Natural killer cell (primary cell): ENCODE measurements at regions of chr19 and their contacts with region 1.

Region 1: GRCh38 chr19:52189735-52190486 is at the start of gene PPP2R1A:
- DNase-seq: peak; percentile 97 to 100
- ATAC-seq: peak; percentile 84 to 93 (median 85)
- H3K4me3 ChIP-seq: peak within 1 kb of the TSS; percentile 61
- H3K4me3 Mint-ChIP-seq: peak within 1 kb of the TSS; percentile 99
- H3K27ac ChIP-seq: peak within 1 kb of the TSS; percentile 87
- H3K27ac Mint-ChIP-seq: peak within 1 kb of the TSS; percentile 99
- H3K4me1 ChIP-seq: peaks cover 36% of the 10 kb centered on the region
- H3K4me1 Mint-ChIP-seq: peaks cover 51 to 57% of the 10 kb centered on the region in 2 donors
- H3K27me3 ChIP-seq: no peaks in the 10 kb centered on the region
- H3K27me3 Mint-ChIP-seq: no peaks in the 10 kb centered on the region
- CTCF ChIP-seq: no peak
- total RNA-seq, gene PPP2R1A: 221 to 256 (median 232) TPM

Region 2: DNA sequence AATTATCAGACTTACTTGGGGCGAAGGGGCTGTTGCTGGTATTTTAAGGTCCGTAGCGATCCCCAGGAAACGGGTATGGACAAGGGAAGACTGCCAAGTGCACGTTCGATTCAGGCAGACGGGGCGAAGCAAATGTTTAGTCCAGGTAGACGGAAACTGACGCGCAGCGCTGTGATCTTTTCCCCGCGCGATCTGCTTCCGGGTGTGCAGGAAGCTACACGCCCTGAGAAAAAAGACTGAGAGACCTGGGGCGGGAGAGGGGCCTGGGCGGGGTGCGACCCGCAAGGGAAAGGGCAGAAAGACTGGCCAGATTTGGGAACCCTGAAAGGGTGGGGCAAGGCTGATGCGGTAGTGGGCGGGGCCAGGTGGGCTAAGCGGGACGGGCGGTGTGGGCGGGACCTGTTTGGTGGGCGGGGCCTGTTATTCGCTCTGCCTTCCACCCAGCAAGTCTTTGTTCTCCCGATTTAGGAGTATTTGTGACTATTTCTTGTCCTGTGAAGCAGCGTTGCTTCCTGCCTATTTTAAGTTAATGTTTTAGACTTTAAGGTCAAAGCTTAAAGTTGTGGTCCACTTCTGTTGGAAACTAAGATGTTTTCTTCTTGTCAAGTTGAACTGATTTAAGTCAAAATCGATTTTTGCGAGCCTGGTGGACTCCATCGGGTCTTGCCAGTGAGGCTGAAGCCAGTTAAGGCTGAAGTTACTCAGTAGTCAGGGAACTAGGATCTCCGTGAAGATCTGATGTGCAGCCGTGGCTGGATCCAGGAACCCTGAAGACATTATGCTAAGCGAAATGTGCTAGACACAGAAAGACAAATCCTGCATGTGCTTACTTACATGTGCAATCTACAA is 18.4 kb before region 1 on chr19 and contains the start of gene ZNF836:
- intact Hi-C with region 1: loop called (anchors 1 kb)
- DNase-seq: peak; percentile 79 to 95
- ATAC-seq: peak; percentile 89 to 93 (median 89)
- H3K4me3 ChIP-seq: peak within 1 kb of the TSS; percentile 83
- H3K4me3 Mint-ChIP-seq: peak within 1 kb of the TSS; percentile 99
- H3K27ac ChIP-seq: peak within 1 kb of the TSS; percentile 80
- H3K27ac Mint-ChIP-seq: peak within 1 kb of the TSS; percentile 87 to 97
- H3K4me1 ChIP-seq: peaks cover 45% of the 10 kb centered on the region
- H3K4me1 Mint-ChIP-seq: peaks cover 42 to 45% of the 10 kb centered on the region in 2 donors
- H3K27me3 ChIP-seq: no peaks in the 10 kb centered on the region
- H3K27me3 Mint-ChIP-seq: no peaks in the 10 kb centered on the region
- CTCF ChIP-seq: no peak
- total RNA-seq, gene ZNF836: 27.9 to 40.2 (median 28.0) TPM

Region 3: GRCh38 chr19:52237771-52238400 is 48.0 kb after region 1 on chr19:
- intact Hi-C with region 1: loop called (anchors 5 kb)
- DNase-seq: peak; percentile 52 to 80
- ATAC-seq: peak; percentile 86 to 99 (median 89)
- H3K4me3 ChIP-seq: no peak overlapping the region
- H3K4me3 Mint-ChIP-seq: no peak overlapping the region
- H3K27ac ChIP-seq: no peak overlapping the region
- H3K27ac Mint-ChIP-seq: no peak overlapping the region
- H3K4me1 ChIP-seq: no peaks in the 10 kb centered on the region
- H3K4me1 Mint-ChIP-seq: no peaks in the 10 kb centered on the region
- H3K27me3 ChIP-seq: no peaks in the 10 kb centered on the region
- H3K27me3 Mint-ChIP-seq: peaks cover 0 to 3% of the 10 kb centered on the region in 2 donors
- CTCF ChIP-seq: peak; percentile 94